Panc1 (cell line): ENCODE measurements at regions of chr17 and their contacts with region 1.

Region 1: GRCh38 chr17:65707780-65708179 is 146.3 kb upstream of the AXIN2 start:
- DNase-seq: no peak
- ATAC-seq: no peak
- H3K4me3 ChIP-seq: no peak overlapping the region
- H3K27ac ChIP-seq: no peak overlapping the region
- H3K4me1 ChIP-seq: no peaks in the 10 kb centered on the region
- H3K27me3 ChIP-seq: no peaks in the 10 kb centered on the region
- CTCF ChIP-seq: no peak

Region 2: DNA sequence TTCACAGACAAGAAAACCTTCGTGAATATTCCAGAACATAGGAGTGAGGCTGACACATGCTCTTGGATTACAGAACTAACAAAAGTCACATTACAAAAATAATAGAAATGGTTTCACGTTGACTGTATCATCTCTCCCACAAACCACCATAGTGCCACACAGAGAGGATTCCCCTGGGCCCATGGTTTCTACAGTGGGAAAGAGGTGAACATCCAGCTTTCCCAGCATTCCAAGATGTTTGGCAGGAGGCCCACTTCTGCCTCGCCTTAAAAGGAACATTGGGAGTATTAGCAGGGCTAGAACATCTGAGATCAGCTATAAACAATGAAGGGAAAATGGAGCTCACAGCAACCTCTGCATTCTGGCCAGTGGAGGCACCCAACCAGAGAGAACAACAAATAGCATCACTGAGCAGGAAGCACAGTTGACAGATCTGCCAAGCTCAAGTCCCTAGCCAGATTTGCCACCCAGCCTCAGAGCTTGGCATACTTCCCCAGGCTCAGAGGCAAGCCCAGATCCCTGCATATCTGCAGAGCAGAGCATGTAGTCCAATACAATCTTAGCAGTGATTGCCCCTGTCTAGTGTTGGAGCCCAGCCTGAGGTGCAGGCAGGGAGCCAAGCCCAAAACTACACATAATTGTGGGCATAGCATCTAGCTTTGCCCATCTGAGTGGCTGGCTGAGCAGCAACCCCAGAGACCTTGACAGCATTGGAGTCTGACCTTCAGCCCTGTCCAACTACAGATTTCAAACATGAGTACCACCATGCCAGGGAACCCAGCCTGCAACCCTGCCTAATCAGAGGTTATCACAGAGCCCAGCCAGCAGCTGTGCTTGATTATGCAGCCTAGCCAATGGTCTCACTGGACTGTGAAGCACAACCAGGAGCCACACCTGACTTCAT is 223.7 kb after region 1 on chr17:
- CTCF ChIA-PET with region 1: no interaction called
- POLR2A ChIA-PET with region 1: no interaction called
- in situ Hi-C with region 1: loop called (anchors 10 kb)
- intact Hi-C with region 1: no loop called
- DNase-seq: no peak
- ATAC-seq: no peak
- H3K4me3 ChIP-seq: no peak overlapping the region
- H3K27ac ChIP-seq: no peak overlapping the region
- H3K4me1 ChIP-seq: no peaks in the 10 kb centered on the region
- H3K27me3 ChIP-seq: no peaks in the 10 kb centered on the region
- CTCF ChIP-seq: no peak

Region 3: GRCh38 chr17:66073384-66073783 is 365.6 kb after region 1 on chr17:
- CTCF ChIA-PET with region 1: no interaction called
- POLR2A ChIA-PET with region 1: no interaction called
- in situ Hi-C with region 1: no loop called
- intact Hi-C with region 1: no loop called
- DNase-seq: no peak
- ATAC-seq: no peak
- H3K4me3 ChIP-seq: no peak overlapping the region
- H3K27ac ChIP-seq: no peak overlapping the region
- H3K4me1 ChIP-seq: no peaks in the 10 kb centered on the region
- H3K27me3 ChIP-seq: no peaks in the 10 kb centered on the region
- CTCF ChIP-seq: no peak

Region 4: GRCh38 chr17:66567234-66568170 is 859.7 kb after region 1 on chr17:
- CTCF ChIA-PET with region 1: no interaction called
- POLR2A ChIA-PET with region 1: no interaction called
- in situ Hi-C with region 1: no loop called
- intact Hi-C with region 1: no loop called
- DNase-seq: peak; percentile 62
- ATAC-seq: peak; percentile 86
- H3K4me3 ChIP-seq: no peak overlapping the region
- H3K27ac ChIP-seq: peak overlapping the region; percentile 75
- H3K4me1 ChIP-seq: peaks cover 41% of the 10 kb centered on the region
- H3K27me3 ChIP-seq: no peaks in the 10 kb centered on the region
- CTCF ChIP-seq: peak; percentile 86